ENCODE measurements at regions of chr2 and their contacts with region 1.

Region 1: GRCh38 chr2:101998896-101999789 is 7.4 kb downstream of the IL1R2 start:
- DNase-seq: peak; percentile 71
- H3K4me3 Mint-ChIP-seq: peak overlapping the region; percentile 66
- H3K27ac Mint-ChIP-seq: peak overlapping the region; percentile 93
- H3K4me1 Mint-ChIP-seq: peaks cover 36% of the 10 kb centered on the region
- H3K27me3 Mint-ChIP-seq: peaks cover 14% of the 10 kb centered on the region

Region 2: GRCh38 chr2:101308432-101309210 is 690.5 kb before region 1 on chr2 and contains the start of gene RNF149:
- CTCF ChIA-PET with region 1: no interaction called
- POLR2A ChIA-PET with region 1: no interaction called
- intact Hi-C with region 1: loop called (anchors 2 kb)
- DNase-seq: peak; percentile 92
- H3K4me3 Mint-ChIP-seq: peak within 1 kb of the TSS; percentile 98
- H3K27ac Mint-ChIP-seq: peak within 1 kb of the TSS; percentile 97
- H3K4me1 Mint-ChIP-seq: peaks cover 65% of the 10 kb centered on the region
- H3K27me3 Mint-ChIP-seq: no peaks in the 10 kb centered on the region
- total RNA-seq, gene RNF149: 42.1 to 46.9 TPM

Region 3: GRCh38 chr2:101883863-101884262 is 115.3 kb before region 1 on chr2:
- CTCF ChIA-PET with region 1: interaction called, 46 read pairs
- POLR2A ChIA-PET with region 1: interaction called, 6 read pairs
- intact Hi-C with region 1: loop called (anchors 1 kb)
- DNase-seq: peak; percentile 60
- H3K4me3 Mint-ChIP-seq: no peak overlapping the region
- H3K27ac Mint-ChIP-seq: peak overlapping the region; percentile 2
- H3K4me1 Mint-ChIP-seq: peaks cover 21% of the 10 kb centered on the region
- H3K27me3 Mint-ChIP-seq: no peaks in the 10 kb centered on the region

Region 4: GRCh38 chr2:102027036-102027980 is 28.2 kb after region 1 on chr2:
- CTCF ChIA-PET with region 1: interaction called, 4 read pairs
- POLR2A ChIA-PET with region 1: no interaction called
- intact Hi-C with region 1: loop called (anchors 1 kb)
- DNase-seq: no peak
- H3K4me3 Mint-ChIP-seq: no peak overlapping the region
- H3K27ac Mint-ChIP-seq: peak overlapping the region; percentile 63
- H3K4me1 Mint-ChIP-seq: peaks cover 64% of the 10 kb centered on the region
- H3K27me3 Mint-ChIP-seq: no peaks in the 10 kb centered on the region

Region 5: GRCh38 chr2:102138331-102138730 is 139.2 kb after region 1 on chr2:
- CTCF ChIA-PET with region 1: interaction called, 4 read pairs
- POLR2A ChIA-PET with region 1: interaction called, 6 read pairs
- intact Hi-C with region 1: loop called (anchors 1 kb)
- DNase-seq: no peak
- H3K4me3 Mint-ChIP-seq: no peak overlapping the region
- H3K27ac Mint-ChIP-seq: peak overlapping the region; percentile 70
- H3K4me1 Mint-ChIP-seq: peaks cover 59% of the 10 kb centered on the region
- H3K27me3 Mint-ChIP-seq: peaks cover 24% of the 10 kb centered on the region

Region 6: DNA sequence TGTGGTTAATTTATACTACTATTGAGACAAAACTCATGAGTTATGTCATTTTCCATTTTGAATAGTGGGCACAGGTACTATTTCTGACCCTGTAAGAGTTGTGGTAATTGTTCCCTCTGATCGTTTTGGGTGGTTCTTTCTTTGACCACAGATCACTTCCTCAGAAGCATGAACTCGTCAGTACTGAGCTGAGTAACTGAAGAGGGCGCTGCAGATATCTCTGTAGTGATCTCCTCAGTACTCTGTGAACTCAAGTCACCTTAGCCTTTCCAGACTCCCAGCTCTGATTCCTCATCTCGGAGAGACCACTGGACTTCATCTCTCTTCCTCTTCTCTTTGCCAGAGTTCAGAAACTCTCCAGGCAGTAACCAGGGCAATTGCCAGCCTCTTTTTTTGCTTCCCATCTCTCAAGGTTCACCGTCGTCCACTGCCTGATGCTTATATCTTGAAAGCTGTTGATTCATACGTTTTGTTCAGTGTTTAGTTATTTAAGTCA is 302.8 kb after region 1 on chr2:
- CTCF ChIA-PET with region 1: interaction called, 4 read pairs
- POLR2A ChIA-PET with region 1: no interaction called
- intact Hi-C with region 1: loop called (anchors 1 kb)
- DNase-seq: peak; percentile 65
- H3K4me3 Mint-ChIP-seq: peak overlapping the region; percentile 4
- H3K27ac Mint-ChIP-seq: peak overlapping the region; percentile 55
- H3K4me1 Mint-ChIP-seq: peaks cover 45% of the 10 kb centered on the region
- H3K27me3 Mint-ChIP-seq: peaks cover 4% of the 10 kb centered on the region